ENCODE measurements at regions of chr6 and their contacts with region 1.

Region 1: GRCh38 chr6:159742165-159742564 is 14.9 kb downstream of the WTAP start:
- DNase-seq: no peak
- ATAC-seq: peak in 2 of 4 donors; percentile 56 to 60
- H3K4me3 ChIP-seq: no peak overlapping the region
- H3K27ac ChIP-seq: peak overlapping the region; percentile 56
- H3K4me1 ChIP-seq: peaks cover 13% of the 10 kb centered on the region
- H3K27me3 ChIP-seq: no peaks in the 10 kb centered on the region
- CTCF ChIP-seq: no peak

Region 2: GRCh38 chr6:159679091-159680077 is 62.8 kb before region 1 on chr6:
- intact Hi-C with region 1: loop called in 1 of 2 experiments (anchors 5 kb)
- DNase-seq: no peak
- ATAC-seq: no peak
- H3K4me3 ChIP-seq: no peak overlapping the region
- H3K27ac ChIP-seq: no peak overlapping the region
- H3K4me1 ChIP-seq: peaks cover 20% of the 10 kb centered on the region
- H3K27me3 ChIP-seq: no peaks in the 10 kb centered on the region
- CTCF ChIP-seq: no peak

Measured in psoas muscle (tissue), 8 donors.